ENCODE measurements at regions of chr21 and their contacts with region 1.

Region 1: GRCh38 chr21:37157938-37158337 is 84.9 kb downstream of the TTC3 start:
- H3K4me3 ChIP-seq: no peak overlapping the region
- H3K27ac ChIP-seq: no peak overlapping the region
- H3K4me1 ChIP-seq: no peaks in the 10 kb centered on the region
- CTCF ChIP-seq: no peak

Region 2: GRCh38 chr21:37119421-37120218 is 38.3 kb before region 1 on chr21:
- CTCF ChIA-PET with region 1: interaction called, 11 read pairs
- POLR2A ChIA-PET with region 1: no interaction called
- H3K4me3 ChIP-seq: no peak overlapping the region
- H3K27ac ChIP-seq: peak overlapping the region; percentile 20; the same call in 1 of the 2 replicates
- H3K4me1 ChIP-seq: peaks cover 15% of the 10 kb centered on the region
- CTCF ChIP-seq: no peak

Region 3: GRCh38 chr21:37324558-37324957 is 166.6 kb after region 1 on chr21:
- CTCF ChIA-PET with region 1: no interaction called
- POLR2A ChIA-PET with region 1: no interaction called
- H3K4me3 ChIP-seq: no peak overlapping the region
- H3K27ac ChIP-seq: no peak overlapping the region
- H3K4me1 ChIP-seq: no peaks in the 10 kb centered on the region
- CTCF ChIP-seq: no peak

Measured in HEK293 (cell line).